ENCODE measurements at regions of chr7 and their contacts with region 1.

Region 1: GRCh38 chr7:5997222-5997808 is 11.5 kb downstream of the PMS2 start:
- DNase-seq: peak; percentile 17 to 80 (median 54)
- ATAC-seq: peak; percentile 76
- H3K4me3 ChIP-seq: no peak overlapping the region
- H3K4me3 Mint-ChIP-seq: no peak overlapping the region
- H3K27ac ChIP-seq: no peak overlapping the region
- H3K27ac Mint-ChIP-seq: no peak overlapping the region
- H3K4me1 ChIP-seq: no peaks in the 10 kb centered on the region
- H3K4me1 Mint-ChIP-seq: no peaks in the 10 kb centered on the region
- H3K27me3 ChIP-seq: no peaks in the 10 kb centered on the region
- H3K27me3 Mint-ChIP-seq: no peaks in the 10 kb centered on the region
- CTCF ChIP-seq: peak; percentile 73

Region 2: DNA sequence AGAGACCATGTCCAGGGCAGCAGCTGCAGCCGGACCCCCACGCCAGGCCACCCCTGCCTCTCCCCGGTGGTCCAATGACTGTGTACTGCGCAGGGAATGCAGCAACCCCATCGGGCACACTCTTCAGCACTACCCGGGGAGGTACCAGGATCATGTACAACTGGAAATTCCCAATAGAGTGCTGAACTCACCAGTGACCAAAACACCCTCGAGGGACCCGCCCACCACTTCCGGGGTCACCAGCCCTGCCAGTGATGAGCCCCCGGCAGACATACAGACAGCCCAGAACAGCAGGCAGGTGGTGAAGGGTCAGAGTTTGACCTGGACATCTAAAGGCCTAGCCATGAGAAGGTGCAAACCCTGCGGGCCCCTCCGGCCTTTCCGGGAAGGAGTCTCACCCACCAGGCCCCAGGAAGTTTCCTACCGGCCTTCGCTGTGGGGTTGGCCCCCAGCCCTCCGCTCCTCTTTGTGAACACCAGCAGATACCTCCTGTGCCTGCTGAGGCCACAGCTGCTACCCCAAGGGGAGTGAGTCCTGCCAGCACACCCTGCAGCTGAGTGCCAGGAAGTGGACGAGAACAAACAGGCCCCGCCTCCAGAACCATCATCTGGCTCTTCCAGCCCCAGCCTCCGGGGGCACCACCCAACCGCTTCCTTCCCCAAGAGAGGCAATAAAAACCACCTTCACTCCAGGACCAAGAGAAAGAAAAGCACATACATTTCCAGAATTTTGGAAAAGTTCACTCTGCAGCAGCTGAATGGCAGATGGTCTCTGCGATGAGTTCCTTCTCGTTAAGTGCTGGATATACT is 28.9 kb after region 1 on chr7:
- CTCF ChIA-PET with region 1: interaction called, 10 read pairs
- POLR2A ChIA-PET with region 1: no interaction called
- intact Hi-C with region 1: no loop called
- DNase-seq: peak; percentile 40 to 88 (median 77)
- ATAC-seq: peak; percentile 100
- H3K4me3 ChIP-seq: peak overlapping the region; percentile 43 to 59
- H3K4me3 Mint-ChIP-seq: peak overlapping the region; percentile 78
- H3K27ac ChIP-seq: peak overlapping the region; percentile 25 to 87
- H3K27ac Mint-ChIP-seq: peak overlapping the region; percentile 90
- H3K4me1 ChIP-seq: peaks cover 20% of the 10 kb centered on the region
- H3K4me1 Mint-ChIP-seq: peaks cover 12% of the 10 kb centered on the region
- H3K27me3 ChIP-seq: no peaks in the 10 kb centered on the region
- H3K27me3 Mint-ChIP-seq: no peaks in the 10 kb centered on the region
- CTCF ChIP-seq: no peak

Region 3: GRCh38 chr7:6106140-6106904 is 109.0 kb after region 1 on chr7:
- CTCF ChIA-PET with region 1: interaction called, 4 read pairs
- POLR2A ChIA-PET with region 1: interaction called, 5 read pairs
- intact Hi-C with region 1: loop called (anchors 1 kb)
- DNase-seq: peak in 6 of 9 experiments; percentile 12 to 76 (median 32)
- ATAC-seq: no peak
- H3K4me3 ChIP-seq: peak overlapping the region; percentile 62 to 70
- H3K4me3 Mint-ChIP-seq: peak overlapping the region; percentile 86
- H3K27ac ChIP-seq: peak overlapping the region; percentile 67 to 88
- H3K27ac Mint-ChIP-seq: peak overlapping the region; percentile 91
- H3K4me1 ChIP-seq: peaks cover 15% of the 10 kb centered on the region
- H3K4me1 Mint-ChIP-seq: peaks cover 42% of the 10 kb centered on the region
- H3K27me3 ChIP-seq: no peaks in the 10 kb centered on the region
- H3K27me3 Mint-ChIP-seq: no peaks in the 10 kb centered on the region
- CTCF ChIP-seq: peak; percentile 29

Region 4: GRCh38 chr7:6121141-6121540 is 123.8 kb after region 1 on chr7:
- CTCF ChIA-PET with region 1: no interaction called
- POLR2A ChIA-PET with region 1: no interaction called
- intact Hi-C with region 1: no loop called
- DNase-seq: no peak
- ATAC-seq: no peak
- H3K4me3 ChIP-seq: no peak overlapping the region
- H3K4me3 Mint-ChIP-seq: no peak overlapping the region
- H3K27ac ChIP-seq: no peak overlapping the region
- H3K27ac Mint-ChIP-seq: no peak overlapping the region
- H3K4me1 ChIP-seq: no peaks in the 10 kb centered on the region
- H3K4me1 Mint-ChIP-seq: peaks cover 14% of the 10 kb centered on the region
- H3K27me3 ChIP-seq: no peaks in the 10 kb centered on the region
- H3K27me3 Mint-ChIP-seq: no peaks in the 10 kb centered on the region
- CTCF ChIP-seq: no peak

Region 5: DNA sequence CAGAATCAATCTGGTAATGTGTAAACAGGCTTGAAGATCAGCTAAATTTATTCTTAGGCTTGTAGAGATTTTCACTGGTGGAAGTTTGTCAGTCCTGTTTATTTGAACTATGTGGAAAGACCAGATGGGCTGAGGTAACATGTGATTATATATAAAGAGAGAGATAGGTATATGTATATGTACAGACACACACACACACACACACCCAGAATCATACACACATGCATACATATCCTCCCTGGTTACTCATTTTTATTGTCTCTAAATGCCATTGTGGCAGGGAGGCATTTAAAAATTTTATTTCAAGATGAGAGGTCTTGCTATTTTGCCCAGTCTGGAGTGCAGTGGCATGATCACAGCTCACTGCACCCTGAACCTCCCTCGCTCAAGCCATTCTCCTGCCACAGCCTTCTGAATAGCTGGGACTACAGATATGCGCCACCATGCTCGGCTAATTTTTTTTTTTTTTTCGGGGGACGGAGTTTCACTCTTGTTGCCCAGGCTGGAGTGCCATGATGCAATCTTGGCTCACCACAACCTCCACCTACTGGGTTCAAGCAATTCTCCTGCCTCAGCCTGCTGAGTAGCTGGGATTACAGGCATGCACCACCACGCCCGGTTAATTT is 353.2 kb after region 1 on chr7:
- CTCF ChIA-PET with region 1: interaction called, 14 read pairs
- POLR2A ChIA-PET with region 1: no interaction called
- intact Hi-C with region 1: no loop called
- DNase-seq: no peak
- ATAC-seq: no peak
- H3K4me3 ChIP-seq: no peak overlapping the region
- H3K4me3 Mint-ChIP-seq: no peak overlapping the region
- H3K27ac ChIP-seq: no peak overlapping the region
- H3K27ac Mint-ChIP-seq: no peak overlapping the region
- H3K4me1 ChIP-seq: peaks cover 5% of the 10 kb centered on the region
- H3K4me1 Mint-ChIP-seq: peaks cover 15% of the 10 kb centered on the region
- H3K27me3 ChIP-seq: no peaks in the 10 kb centered on the region
- H3K27me3 Mint-ChIP-seq: peaks cover 3% of the 10 kb centered on the region
- CTCF ChIP-seq: no peak

Region 6: GRCh38 chr7:6435486-6436384 is 438.4 kb after region 1 on chr7:
- CTCF ChIA-PET with region 1: no interaction called
- POLR2A ChIA-PET with region 1: no interaction called
- intact Hi-C with region 1: loop called (anchors 1 to 10 kb)
- DNase-seq: peak; percentile 79 to 93 (median 87)
- ATAC-seq: peak; percentile 97
- H3K4me3 ChIP-seq: peak overlapping the region; percentile 3 to 50
- H3K4me3 Mint-ChIP-seq: peak overlapping the region; percentile 80
- H3K27ac ChIP-seq: peak overlapping the region; percentile 17 to 31
- H3K27ac Mint-ChIP-seq: peak overlapping the region; percentile 90
- H3K4me1 ChIP-seq: peaks cover 37% of the 10 kb centered on the region
- H3K4me1 Mint-ChIP-seq: peaks cover 43% of the 10 kb centered on the region
- H3K27me3 ChIP-seq: no peaks in the 10 kb centered on the region
- H3K27me3 Mint-ChIP-seq: no peaks in the 10 kb centered on the region
- CTCF ChIP-seq: peak; percentile 95